ENCODE measurements at regions of chr7 and their contacts with region 1.

Region 1: DNA sequence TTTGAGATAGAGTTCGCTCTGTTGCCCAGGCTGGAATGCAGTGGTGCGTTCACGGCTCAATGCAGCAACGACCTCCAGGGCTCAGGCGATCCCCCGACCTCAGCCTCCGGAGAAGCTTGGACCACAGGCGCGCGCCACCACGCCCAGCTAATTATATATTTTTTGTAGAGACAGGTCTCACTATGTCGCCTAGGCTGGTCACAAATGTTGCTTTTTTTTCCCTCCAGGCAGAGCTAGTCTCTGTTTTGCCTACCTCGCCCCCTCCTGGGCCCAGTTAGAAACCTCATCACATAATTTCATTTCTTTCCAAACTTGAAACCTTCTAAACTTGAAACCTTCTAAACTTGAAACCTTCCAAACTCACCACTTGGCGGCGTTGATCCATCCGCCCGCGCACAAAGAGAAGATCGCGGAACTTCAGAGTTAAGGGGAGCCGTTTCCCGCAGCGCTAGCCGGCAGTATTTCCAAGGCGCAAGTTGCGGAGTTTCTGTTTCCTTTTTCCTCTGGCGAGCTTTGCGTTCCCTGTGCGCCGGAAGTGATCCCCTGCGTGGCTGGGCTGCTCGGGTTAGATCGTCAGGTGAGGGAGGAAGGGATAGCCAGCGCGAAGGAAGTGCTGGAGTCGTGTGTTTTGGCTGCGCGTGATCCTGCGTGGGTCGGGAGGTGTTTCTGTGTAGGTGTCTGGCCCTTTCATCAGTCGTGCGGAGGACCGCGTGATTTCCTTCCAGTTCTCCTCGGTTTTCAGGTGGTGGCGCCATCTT is at the start of gene SSBP1:
- DNase-seq: peak; percentile 94
- H3K4me3 Mint-ChIP-seq: peak within 1 kb of the TSS; percentile 94
- H3K27ac Mint-ChIP-seq: peak within 1 kb of the TSS; percentile 93
- H3K4me1 Mint-ChIP-seq: peaks cover 41% of the 10 kb centered on the region
- H3K27me3 Mint-ChIP-seq: no peaks in the 10 kb centered on the region
- total RNA-seq, gene SSBP1: 124 to 125 TPM

Region 2: DNA sequence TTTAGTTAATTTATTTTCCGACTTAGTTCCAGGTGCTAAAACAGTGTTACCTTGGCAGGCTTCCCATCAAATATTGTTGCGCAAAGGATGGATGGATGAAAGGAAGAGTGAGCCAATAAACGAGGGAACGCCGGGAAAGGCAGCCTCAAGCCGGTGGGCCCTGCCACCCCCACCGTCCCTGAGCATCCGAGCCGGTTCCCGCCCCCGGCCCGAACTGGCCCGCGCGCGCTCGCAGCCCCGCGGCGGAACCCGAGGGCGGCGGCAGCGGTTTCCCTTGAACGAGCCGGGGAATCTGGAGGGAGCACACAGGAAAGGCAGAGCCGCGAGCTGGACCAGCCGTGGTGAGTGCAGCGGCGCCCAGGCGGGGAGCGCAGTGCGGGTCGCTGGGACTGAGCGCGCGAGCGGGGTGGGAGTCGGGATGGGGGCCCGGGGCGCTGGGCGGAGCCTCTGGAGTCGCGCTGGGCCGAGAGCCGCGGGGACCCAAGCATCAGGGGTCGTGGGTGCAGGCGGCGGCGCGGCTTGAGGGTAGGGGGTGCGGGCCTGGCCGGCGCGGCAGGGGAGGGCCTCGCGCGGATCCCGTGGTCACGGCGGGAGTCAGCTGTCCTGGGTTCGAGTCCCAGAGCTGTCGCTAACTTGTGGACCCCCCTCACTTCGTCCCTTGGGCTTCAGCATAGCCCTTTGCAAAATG is 186.8 kb before region 1 on chr7 and contains the start of gene AGK:
- CTCF ChIA-PET with region 1: interaction called, 30 read pairs
- POLR2A ChIA-PET with region 1: interaction called, 30 read pairs
- DNase-seq: peak; percentile 82
- H3K4me3 Mint-ChIP-seq: peak within 1 kb of the TSS; percentile 90
- H3K27ac Mint-ChIP-seq: peak within 1 kb of the TSS; percentile 75
- H3K4me1 Mint-ChIP-seq: peaks cover 36% of the 10 kb centered on the region
- H3K27me3 Mint-ChIP-seq: no peaks in the 10 kb centered on the region
- total RNA-seq, gene AGK: 46.9 to 50.4 TPM

Region 3: DNA sequence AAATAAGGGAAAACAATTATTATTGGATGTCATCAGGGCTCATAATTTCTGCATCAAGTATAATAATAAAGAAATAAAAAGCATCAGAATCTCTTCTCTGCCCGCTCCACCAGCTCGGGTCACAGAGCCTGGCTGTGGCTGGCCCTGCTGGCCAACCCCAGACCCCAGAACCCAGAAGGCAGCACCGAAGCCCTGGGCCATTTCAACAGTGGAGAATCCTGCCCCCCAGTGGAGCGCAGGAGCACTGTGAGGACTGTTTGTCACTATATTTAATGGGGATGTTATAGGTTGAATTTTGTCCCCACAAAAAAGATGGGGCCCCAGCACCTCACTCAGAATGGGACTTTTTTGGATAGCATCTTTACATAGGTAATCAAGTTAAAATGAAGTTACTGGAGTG is 63.3 kb before region 1 on chr7:
- CTCF ChIA-PET with region 1: interaction called, 20 read pairs
- POLR2A ChIA-PET with region 1: interaction called, 8 read pairs
- DNase-seq: no peak
- H3K4me3 Mint-ChIP-seq: no peak overlapping the region
- H3K27ac Mint-ChIP-seq: peak overlapping the region; percentile 70
- H3K4me1 Mint-ChIP-seq: peaks cover 37% of the 10 kb centered on the region
- H3K27me3 Mint-ChIP-seq: no peaks in the 10 kb centered on the region

Region 4: GRCh38 chr7:141701489-141702046 is 36.4 kb before region 1 on chr7:
- CTCF ChIA-PET with region 1: interaction called, 26 read pairs
- POLR2A ChIA-PET with region 1: interaction called, 46 read pairs
- DNase-seq: peak; percentile 78
- H3K4me3 Mint-ChIP-seq: peak overlapping the region; percentile 79
- H3K27ac Mint-ChIP-seq: peak overlapping the region; percentile 54
- H3K4me1 Mint-ChIP-seq: peaks cover 30% of the 10 kb centered on the region
- H3K27me3 Mint-ChIP-seq: peaks cover 29% of the 10 kb centered on the region

Region 5: GRCh38 chr7:141752634-141753033 is 14.6 kb after region 1 on chr7:
- CTCF ChIA-PET with region 1: interaction called, 11 read pairs
- POLR2A ChIA-PET with region 1: interaction called, 5 read pairs
- DNase-seq: no peak
- H3K4me3 Mint-ChIP-seq: no peak overlapping the region
- H3K27ac Mint-ChIP-seq: no peak overlapping the region
- H3K4me1 Mint-ChIP-seq: no peaks in the 10 kb centered on the region
- H3K27me3 Mint-ChIP-seq: no peaks in the 10 kb centered on the region

Measured in activated CD4-positive, alpha-beta memory T cell treated with anti-CD3 and anti-CD28 coated beads, Interleukin-2, amount 10 ng/mL, durations not matched to agents 7 days and 5 days (primary cell).